ENCODE measurements at regions of chr9 and their contacts with region 1.

Region 1: DNA sequence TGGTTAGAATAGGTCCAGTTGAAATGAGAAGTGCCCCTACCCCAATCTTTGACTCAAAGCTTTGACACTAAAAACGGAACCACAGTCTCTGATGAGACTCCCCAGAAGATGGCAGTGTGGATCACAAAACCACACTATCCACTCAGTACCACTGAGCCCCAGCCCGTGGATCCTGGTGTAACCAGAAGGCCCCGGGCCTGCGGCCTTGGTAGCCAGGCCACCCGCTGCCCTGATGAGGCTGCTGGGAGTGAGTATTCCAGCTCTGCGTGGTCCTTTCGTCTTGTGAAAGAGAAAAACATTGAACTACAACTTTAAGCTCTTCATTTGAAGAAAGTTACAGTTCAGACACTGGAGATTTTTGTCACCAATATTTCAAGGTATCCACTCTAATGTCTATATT is 42.2 kb upstream of the FBP1 start:
- DNase-seq: peak; percentile 80
- ATAC-seq: peak; percentile 99
- H3K4me3 ChIP-seq: no peak overlapping the region
- H3K27ac ChIP-seq: no peak overlapping the region
- H3K4me1 ChIP-seq: no peaks in the 10 kb centered on the region; the same call in 1 of the 2 replicates
- H3K27me3 ChIP-seq: no peaks in the 10 kb centered on the region; the same call in 1 of the 2 replicates
- CTCF ChIP-seq: peak; percentile 85
- POLR2A ChIP-seq: no peak
- RAD21 ChIP-seq: peak; percentile 92

Region 2: DNA sequence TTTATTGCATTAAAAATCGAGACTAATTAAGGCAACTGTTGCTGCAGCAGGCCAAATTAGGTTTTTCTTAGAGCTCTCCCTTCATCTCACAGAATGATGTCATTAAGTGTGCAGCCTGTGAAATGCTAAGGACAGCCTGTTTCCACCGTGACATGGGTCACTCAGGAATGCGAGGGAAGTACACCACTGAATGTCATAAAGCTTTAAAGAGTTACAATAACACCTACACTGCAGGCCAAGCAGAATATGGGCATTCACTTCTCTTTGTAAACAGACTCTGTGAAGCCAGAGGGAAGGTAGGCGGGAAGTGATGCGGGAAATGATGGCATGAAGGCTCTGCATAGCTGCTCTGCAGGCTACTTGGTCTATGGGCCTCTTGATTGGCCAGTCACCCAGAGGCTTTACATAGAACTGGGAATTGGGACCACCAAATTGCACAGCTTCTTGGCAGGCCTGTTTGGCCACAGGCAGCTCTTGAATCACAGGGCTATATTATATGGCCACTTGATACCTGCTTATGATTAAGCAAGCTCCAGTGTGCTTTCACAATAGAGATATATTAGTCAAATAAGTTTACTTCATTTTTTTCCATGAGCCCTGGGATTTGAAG is 16.6 kb after region 1 on chr9:
- CTCF ChIA-PET with region 1: interaction called, 12 read pairs
- POLR2A ChIA-PET with region 1: no interaction called
- dilution Hi-C with region 1: no loop called
- in situ Hi-C with region 1: no loop called
- intact Hi-C with region 1: no loop called
- DNase-seq: peak; percentile 50
- ATAC-seq: peak; percentile 68
- H3K4me3 ChIP-seq: no peak overlapping the region
- H3K27ac ChIP-seq: no peak overlapping the region
- H3K4me1 ChIP-seq: no peaks in the 10 kb centered on the region
- H3K27me3 ChIP-seq: no peaks in the 10 kb centered on the region
- CTCF ChIP-seq: no peak
- POLR2A ChIP-seq: no peak
- RAD21 ChIP-seq: no peak

Region 3: GRCh38 chr9:94839398-94839797 is 157.9 kb after region 1 on chr9:
- CTCF ChIA-PET with region 1: no interaction called
- POLR2A ChIA-PET with region 1: no interaction called
- dilution Hi-C with region 1: no loop called
- in situ Hi-C with region 1: no loop called
- intact Hi-C with region 1: no loop called
- DNase-seq: no peak
- ATAC-seq: no peak
- H3K4me3 ChIP-seq: no peak overlapping the region
- H3K27ac ChIP-seq: no peak overlapping the region
- H3K4me1 ChIP-seq: no peaks in the 10 kb centered on the region; the same call in 1 of the 2 replicates
- H3K27me3 ChIP-seq: no peaks in the 10 kb centered on the region
- CTCF ChIP-seq: no peak
- POLR2A ChIP-seq: no peak
- RAD21 ChIP-seq: no peak

Region 4: GRCh38 chr9:95078958-95079357 is 397.4 kb after region 1 on chr9:
- CTCF ChIA-PET with region 1: no interaction called
- POLR2A ChIA-PET with region 1: no interaction called
- dilution Hi-C with region 1: no loop called
- in situ Hi-C with region 1: no loop called
- intact Hi-C with region 1: loop called (anchors 5 kb)
- DNase-seq: no peak
- ATAC-seq: peak; percentile 60
- H3K4me3 ChIP-seq: no peak overlapping the region
- H3K27ac ChIP-seq: peak overlapping the region; percentile 1; the same call in 1 of the 2 replicates
- H3K4me1 ChIP-seq: peaks cover 19% of the 10 kb centered on the region
- H3K27me3 ChIP-seq: no peaks in the 10 kb centered on the region
- CTCF ChIP-seq: no peak
- POLR2A ChIP-seq: no peak
- RAD21 ChIP-seq: no peak

Region 5: GRCh38 chr9:95127249-95128176 is 446.0 kb after region 1 on chr9:
- CTCF ChIA-PET with region 1: interaction called, 47 read pairs
- POLR2A ChIA-PET with region 1: no interaction called
- dilution Hi-C with region 1: no loop called
- in situ Hi-C with region 1: loop called (anchors 5 kb)
- intact Hi-C with region 1: loop called (anchors 1 kb)
- DNase-seq: peak; percentile 71
- ATAC-seq: peak; percentile 99
- H3K4me3 ChIP-seq: peak overlapping the region; percentile 27; the same call in 1 of the 2 replicates
- H3K27ac ChIP-seq: no peak overlapping the region
- H3K4me1 ChIP-seq: peaks cover 2% of the 10 kb centered on the region; the same call in 1 of the 2 replicates
- H3K27me3 ChIP-seq: no peaks in the 10 kb centered on the region
- CTCF ChIP-seq: peak; percentile 99
- POLR2A ChIP-seq: no peak
- RAD21 ChIP-seq: peak; percentile 87

Region 6: DNA sequence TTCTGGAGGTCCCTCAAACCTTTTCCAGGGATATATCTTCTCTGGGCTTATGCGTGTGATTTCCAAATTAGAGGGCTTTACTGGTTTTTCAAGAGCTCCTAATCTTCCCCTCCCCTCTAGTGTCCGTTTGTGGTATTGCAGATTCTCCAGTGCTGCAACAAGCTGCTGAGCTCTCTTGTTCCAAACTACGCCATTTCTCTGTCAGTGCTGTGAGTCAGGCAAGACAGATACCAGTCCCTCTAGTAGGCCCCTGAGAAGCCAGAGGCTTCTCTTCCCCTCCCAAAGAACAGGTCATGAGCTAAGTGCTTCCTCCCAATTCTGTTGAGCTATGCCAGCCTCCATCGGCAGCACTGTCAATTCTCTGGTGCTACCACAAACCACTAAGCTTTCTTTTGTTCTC is 486.5 kb after region 1 on chr9:
- CTCF ChIA-PET with region 1: interaction called, 11 read pairs
- POLR2A ChIA-PET with region 1: no interaction called
- dilution Hi-C with region 1: no loop called
- in situ Hi-C with region 1: no loop called
- intact Hi-C with region 1: no loop called
- DNase-seq: peak; percentile 97
- ATAC-seq: peak; percentile 89
- H3K4me3 ChIP-seq: no peak overlapping the region
- H3K27ac ChIP-seq: peak overlapping the region; percentile 15; the same call in 1 of the 2 replicates
- H3K4me1 ChIP-seq: peaks cover 5% of the 10 kb centered on the region
- H3K27me3 ChIP-seq: no peaks in the 10 kb centered on the region
- CTCF ChIP-seq: peak; percentile 79
- POLR2A ChIP-seq: no peak
- RAD21 ChIP-seq: peak; percentile 72

Measured in IMR-90 (cell line).